ENCODE measurements at regions of chr5 and their contacts with region 1.

Region 1: DNA sequence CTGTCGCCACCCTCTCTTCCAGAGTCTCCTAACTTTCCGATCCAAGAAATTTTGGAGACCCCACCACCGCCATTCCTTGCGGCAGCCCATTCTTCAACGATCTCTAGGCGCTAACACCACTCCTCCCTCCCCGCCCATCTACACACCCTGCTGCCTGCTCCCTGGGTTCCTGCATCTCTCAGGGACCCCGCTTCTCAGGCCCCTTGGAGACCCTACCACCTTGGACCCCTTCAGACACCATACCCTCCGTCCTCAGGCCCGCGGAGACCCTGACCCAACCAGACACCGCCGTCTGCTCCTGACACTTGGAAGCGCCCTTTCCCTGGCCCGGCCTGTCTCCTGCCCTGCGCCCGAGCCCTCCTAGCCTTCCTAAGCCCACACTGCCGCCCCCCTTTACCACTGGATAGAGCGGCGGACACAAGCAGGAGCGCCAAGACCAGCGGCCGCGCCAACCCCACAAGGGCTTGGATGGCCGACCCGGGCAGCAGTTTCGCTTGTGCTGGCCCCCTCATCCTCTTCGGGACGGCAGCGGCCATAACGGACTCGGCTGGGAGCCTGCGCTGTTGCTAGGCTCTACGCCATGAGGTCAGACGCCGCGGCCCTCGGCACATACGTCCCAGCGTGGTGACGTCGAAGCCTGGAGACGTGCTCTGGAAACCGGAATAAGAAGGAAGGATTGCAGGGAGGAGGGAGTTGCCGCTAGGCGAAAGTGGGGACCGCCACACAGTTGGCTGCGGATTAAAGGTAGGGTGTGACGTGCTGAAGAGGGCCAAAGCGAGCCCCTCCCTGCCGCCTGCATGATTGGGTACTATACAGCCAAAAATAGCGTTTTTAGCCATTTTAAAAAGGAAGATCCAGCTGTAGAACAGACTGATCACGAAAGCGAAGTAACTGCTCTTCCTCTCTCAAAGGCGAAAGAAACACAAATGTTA is at the start of gene C5orf15:
- DNase-seq: peak; percentile 94
- ATAC-seq: peak; percentile 94
- H3K4me3 ChIP-seq: peak within 1 kb of the TSS; percentile 98
- H3K27ac ChIP-seq: peak within 1 kb of the TSS; percentile 73
- H3K4me1 ChIP-seq: no peaks in the 10 kb centered on the region
- H3K27me3 ChIP-seq: no peaks in the 10 kb centered on the region
- CTCF ChIP-seq: 0 out of 6 replicates have a peak, but pooled peaks of 1 of the 3 experiments have one; percentile 2
- EP300 ChIP-seq: 0 out of 4 replicates have a peak, but pooled peaks of 1 of the 2 experiments have one; percentile 13
- POLR2A ChIP-seq: peak; percentile 98
- RAD21 ChIP-seq: no peak
- polyA plus RNA-seq, gene C5orf15: 36.3 to 42.2 TPM

Region 2: DNA sequence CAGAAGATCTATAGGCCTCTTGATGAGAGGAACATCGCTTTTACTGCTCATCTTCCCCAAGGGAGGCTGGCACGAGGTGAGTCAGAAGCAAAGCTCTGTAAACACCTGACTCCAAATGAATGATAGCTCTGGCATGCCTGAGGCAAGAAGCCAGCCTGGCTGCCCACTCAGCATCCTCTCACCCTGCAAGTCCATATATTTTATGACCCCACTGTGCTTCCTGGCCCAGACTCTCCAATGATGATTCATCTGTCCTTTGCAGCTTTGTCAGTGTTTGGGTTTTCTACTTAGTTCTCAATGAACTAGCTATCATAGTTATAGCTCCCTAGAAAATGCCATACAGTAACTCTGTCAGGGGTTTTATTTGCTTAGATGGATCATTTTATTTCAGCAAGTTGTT is 303.9 kb before region 1 on chr5:
- CTCF ChIA-PET with region 1: no interaction called
- POLR2A ChIA-PET with region 1: no interaction called
- RAD21 ChIA-PET with region 1: no interaction called
- SMC1A ChIA-PET with region 1: no interaction called
- in situ Hi-C with region 1: no loop called
- intact Hi-C with region 1: no loop called
- DNase-seq: no peak
- ATAC-seq: no peak
- H3K4me3 ChIP-seq: no peak overlapping the region
- H3K27ac ChIP-seq: no peak overlapping the region
- H3K4me1 ChIP-seq: no peaks in the 10 kb centered on the region
- H3K27me3 ChIP-seq: peaks cover 5 to 8% of the 10 kb centered on the region in 2 experiments; a peak in 2 of 4 replicates
- CTCF ChIP-seq: no peak
- EP300 ChIP-seq: no peak
- POLR2A ChIP-seq: no peak
- RAD21 ChIP-seq: no peak

Region 3: DNA sequence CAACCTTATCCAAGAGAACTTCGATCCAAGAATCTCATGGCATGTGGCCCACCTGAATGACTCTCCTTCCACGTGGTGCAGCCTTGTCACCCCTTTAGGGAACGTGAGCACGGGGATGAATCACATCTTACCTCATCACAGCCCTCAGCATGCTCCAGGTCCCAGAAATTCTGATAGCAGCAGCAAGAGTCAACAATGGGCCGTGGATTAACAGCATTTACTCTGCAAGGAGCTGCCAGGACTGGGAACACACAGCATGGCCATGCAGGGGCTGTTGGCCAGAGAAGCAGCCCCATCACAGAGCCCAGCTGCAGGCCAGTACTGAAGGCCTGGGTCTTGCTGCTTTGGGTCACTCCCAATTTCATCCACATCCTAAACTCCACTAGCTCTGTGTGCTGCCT is 150.3 kb before region 1 on chr5:
- CTCF ChIA-PET with region 1: no interaction called
- POLR2A ChIA-PET with region 1: no interaction called
- RAD21 ChIA-PET with region 1: no interaction called
- SMC1A ChIA-PET with region 1: no interaction called
- in situ Hi-C with region 1: no loop called
- intact Hi-C with region 1: no loop called
- DNase-seq: no peak
- ATAC-seq: no peak
- H3K4me3 ChIP-seq: no peak overlapping the region
- H3K27ac ChIP-seq: no peak overlapping the region
- H3K4me1 ChIP-seq: peaks cover 7% of the 10 kb centered on the region
- H3K27me3 ChIP-seq: no peaks in the 10 kb centered on the region
- CTCF ChIP-seq: no peak
- EP300 ChIP-seq: no peak
- POLR2A ChIP-seq: no peak
- RAD21 ChIP-seq: no peak

Region 4: DNA sequence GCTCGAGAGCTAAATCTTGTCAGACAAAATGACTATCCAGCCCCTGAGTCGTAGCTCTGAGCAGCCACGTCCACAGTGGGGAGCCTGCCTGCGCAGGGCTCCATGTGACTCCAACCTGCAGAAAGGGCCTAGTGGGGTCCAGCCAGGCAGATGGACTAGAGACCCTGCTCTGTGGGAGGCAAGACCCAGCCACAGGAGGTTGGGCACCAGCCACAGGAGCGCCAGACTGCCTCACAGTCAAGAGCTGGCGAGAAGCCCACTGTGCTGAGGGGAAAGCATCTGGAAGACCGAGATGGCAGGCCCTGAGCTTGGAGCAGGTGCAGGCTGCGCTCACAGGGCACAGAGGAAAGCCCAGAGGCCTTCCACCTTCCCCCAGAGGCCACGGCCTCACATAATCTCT is 61.2 kb before region 1 on chr5:
- CTCF ChIA-PET with region 1: interaction called, 10 read pairs
- POLR2A ChIA-PET with region 1: no interaction called
- RAD21 ChIA-PET with region 1: interaction called, 8 read pairs
- SMC1A ChIA-PET with region 1: interaction called, 8 read pairs
- in situ Hi-C with region 1: no loop called
- intact Hi-C with region 1: no loop called
- DNase-seq: no peak
- ATAC-seq: no peak
- H3K4me3 ChIP-seq: no peak overlapping the region
- H3K27ac ChIP-seq: no peak overlapping the region
- H3K4me1 ChIP-seq: no peaks in the 10 kb centered on the region
- H3K27me3 ChIP-seq: no peaks in the 10 kb centered on the region; a peak in 2 of 4 replicates
- CTCF ChIP-seq: no peak
- EP300 ChIP-seq: no peak
- POLR2A ChIP-seq: no peak
- RAD21 ChIP-seq: no peak

Region 5: DNA sequence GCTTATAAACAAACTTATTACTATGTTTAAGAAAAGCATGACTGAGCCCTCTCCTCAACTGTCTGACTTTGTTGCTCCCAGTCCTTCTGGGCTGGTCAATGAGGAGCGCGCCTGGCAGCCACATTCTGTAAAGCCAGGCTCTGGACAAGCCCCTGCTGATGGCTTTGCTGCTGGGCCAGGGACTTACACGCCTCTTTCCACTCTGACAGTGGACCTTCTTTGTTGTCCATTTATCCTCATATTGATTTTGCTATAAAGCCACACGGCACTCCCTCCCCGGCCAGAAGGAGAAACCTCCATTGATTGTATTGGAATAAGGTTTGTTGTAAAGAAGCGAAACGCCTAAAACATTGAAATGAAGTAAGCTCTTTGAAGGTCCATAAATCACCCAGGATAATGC is 50.5 kb before region 1 on chr5:
- CTCF ChIA-PET with region 1: no interaction called
- POLR2A ChIA-PET with region 1: no interaction called
- RAD21 ChIA-PET with region 1: no interaction called
- SMC1A ChIA-PET with region 1: no interaction called
- in situ Hi-C with region 1: no loop called
- intact Hi-C with region 1: no loop called
- DNase-seq: no peak
- ATAC-seq: no peak
- H3K4me3 ChIP-seq: no peak overlapping the region
- H3K27ac ChIP-seq: no peak overlapping the region
- H3K4me1 ChIP-seq: no peaks in the 10 kb centered on the region
- H3K27me3 ChIP-seq: no peaks in the 10 kb centered on the region
- CTCF ChIP-seq: no peak
- EP300 ChIP-seq: no peak
- POLR2A ChIP-seq: no peak
- RAD21 ChIP-seq: no peak

Region 6: GRCh38 chr5:133930061-133930812 is 38.1 kb before region 1 on chr5:
- CTCF ChIA-PET with region 1: interaction called, 14 read pairs
- POLR2A ChIA-PET with region 1: no interaction called
- RAD21 ChIA-PET with region 1: interaction called, 10 read pairs
- SMC1A ChIA-PET with region 1: interaction called, 13 read pairs
- in situ Hi-C with region 1: no loop called
- intact Hi-C with region 1: no loop called
- DNase-seq: no peak
- ATAC-seq: peak; percentile 42
- H3K4me3 ChIP-seq: peak overlapping the region; percentile 38; the same call in 1 of the 2 replicates
- H3K27ac ChIP-seq: peak overlapping the region; percentile 52
- H3K4me1 ChIP-seq: peaks cover 60% of the 10 kb centered on the region
- H3K27me3 ChIP-seq: no peaks in the 10 kb centered on the region
- CTCF ChIP-seq: no peak
- EP300 ChIP-seq: peak in 1 of 2 experiments; percentile 12; a peak in 1 of 4 replicates
- POLR2A ChIP-seq: peak; percentile 62
- RAD21 ChIP-seq: no peak

Region 7: DNA sequence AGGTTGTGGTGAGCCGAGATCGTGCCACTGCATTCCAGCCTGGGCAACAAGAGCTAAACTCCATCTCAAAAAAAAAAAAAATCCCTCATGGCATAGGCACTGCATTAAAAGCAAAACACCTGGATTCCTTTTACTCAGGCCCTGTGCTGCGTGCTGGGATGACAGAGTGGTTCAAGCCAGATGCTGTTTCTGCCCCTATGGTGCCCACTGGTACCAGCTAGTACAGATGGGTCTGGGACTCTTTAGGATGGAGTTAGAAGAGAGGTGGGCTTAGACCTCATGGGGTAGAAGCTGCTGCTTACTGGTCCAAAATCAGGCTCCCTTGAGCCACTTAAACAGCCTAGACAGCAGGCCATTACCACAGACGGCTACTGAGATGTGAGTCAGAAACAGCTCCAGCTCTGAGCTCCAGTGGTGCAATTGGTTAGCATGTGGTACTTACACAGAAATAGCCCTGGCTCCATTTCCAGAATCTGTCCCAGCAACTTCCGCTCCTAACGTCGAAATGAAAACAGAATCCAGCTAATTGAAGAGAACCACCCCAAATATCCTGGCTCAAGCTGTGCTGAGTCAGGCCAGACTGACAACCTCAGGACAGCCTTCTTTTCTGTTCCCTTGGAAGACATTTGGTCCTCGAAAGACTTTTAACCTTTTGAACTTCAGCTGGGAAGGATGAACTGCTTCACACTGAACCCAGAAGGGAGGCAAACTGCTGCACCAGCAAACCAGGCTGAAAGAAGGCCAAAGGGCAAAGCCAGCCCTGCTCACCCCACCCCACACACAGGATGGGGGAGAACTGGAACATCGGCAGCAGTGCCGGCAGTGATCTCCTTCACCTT is 15.4 kb before region 1 on chr5:
- CTCF ChIA-PET with region 1: interaction called, 10 read pairs
- POLR2A ChIA-PET with region 1: interaction called, 12 read pairs
- RAD21 ChIA-PET with region 1: interaction called, 19 read pairs
- SMC1A ChIA-PET with region 1: interaction called, 6 read pairs
- in situ Hi-C with region 1: no loop called
- intact Hi-C with region 1: no loop called
- DNase-seq: no peak
- ATAC-seq: no peak
- H3K4me3 ChIP-seq: no peak overlapping the region
- H3K27ac ChIP-seq: no peak overlapping the region
- H3K4me1 ChIP-seq: peaks cover 9% of the 10 kb centered on the region
- H3K27me3 ChIP-seq: no peaks in the 10 kb centered on the region
- CTCF ChIP-seq: no peak
- EP300 ChIP-seq: no peak
- POLR2A ChIP-seq: no peak
- RAD21 ChIP-seq: no peak

Region 8: GRCh38 chr5:133996683-133997252 is 28.5 kb after region 1 on chr5:
- CTCF ChIA-PET with region 1: interaction called, 24 read pairs
- POLR2A ChIA-PET with region 1: interaction called, 6 read pairs
- RAD21 ChIA-PET with region 1: interaction called, 6 read pairs
- SMC1A ChIA-PET with region 1: interaction called, 16 read pairs
- in situ Hi-C with region 1: no loop called
- intact Hi-C with region 1: no loop called
- DNase-seq: no peak
- ATAC-seq: peak; percentile 53
- H3K4me3 ChIP-seq: peak overlapping the region; percentile 38; the same call in 1 of the 2 replicates
- H3K27ac ChIP-seq: no peak overlapping the region
- H3K4me1 ChIP-seq: peaks cover 25% of the 10 kb centered on the region
- H3K27me3 ChIP-seq: no peaks in the 10 kb centered on the region
- CTCF ChIP-seq: peak; percentile 67 to 72 (median 68)
- EP300 ChIP-seq: no peak
- POLR2A ChIP-seq: no peak
- RAD21 ChIP-seq: peak; percentile 33

Region 9: GRCh38 chr5:134249469-134250379 is 281.4 kb after region 1 on chr5:
- CTCF ChIA-PET with region 1: no interaction called
- POLR2A ChIA-PET with region 1: no interaction called
- RAD21 ChIA-PET with region 1: no interaction called
- SMC1A ChIA-PET with region 1: no interaction called
- in situ Hi-C with region 1: no loop called
- intact Hi-C with region 1: no loop called
- DNase-seq: no peak
- ATAC-seq: no peak
- H3K4me3 ChIP-seq: no peak overlapping the region
- H3K27ac ChIP-seq: no peak overlapping the region
- H3K4me1 ChIP-seq: no peaks in the 10 kb centered on the region
- H3K27me3 ChIP-seq: no peaks in the 10 kb centered on the region
- CTCF ChIP-seq: no peak
- EP300 ChIP-seq: no peak
- POLR2A ChIP-seq: no peak
- RAD21 ChIP-seq: no peak